CD8-positive, alpha-beta T cell (primary cell): ENCODE measurements at regions of chr9 and their contacts with region 1.

Region 1: DNA sequence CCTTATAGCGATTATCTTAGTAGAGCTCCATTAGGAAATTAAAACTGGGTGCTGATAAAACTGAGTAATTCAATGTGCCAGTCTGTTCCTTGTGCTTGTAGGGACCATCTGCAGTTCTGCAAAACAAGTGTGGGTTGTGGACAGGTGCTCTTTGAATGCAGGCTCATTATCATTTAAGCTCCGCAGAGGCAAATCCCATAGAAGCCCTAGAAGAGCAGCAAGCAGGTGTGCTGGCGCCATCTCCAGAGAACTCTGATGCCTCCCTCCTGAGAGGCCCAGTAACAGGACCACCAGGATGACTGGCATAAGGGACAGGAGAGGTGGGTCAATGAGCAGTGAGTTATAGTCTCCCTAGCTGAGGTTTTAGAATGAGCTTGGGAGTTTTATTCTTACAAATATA is 1342.4 kb upstream of the DMAC1 start:
- DNase-seq: no peak
- ATAC-seq: no peak
- H3K4me3 ChIP-seq: no peak overlapping the region
- H3K4me3 Mint-ChIP-seq: no peak overlapping the region
- H3K27ac ChIP-seq: no peak overlapping the region
- H3K27ac Mint-ChIP-seq: no peak overlapping the region
- H3K4me1 ChIP-seq: no peaks in the 10 kb centered on the region
- H3K4me1 Mint-ChIP-seq: no peaks in the 10 kb centered on the region
- H3K27me3 ChIP-seq: no peaks in the 10 kb centered on the region
- H3K27me3 Mint-ChIP-seq: no peaks in the 10 kb centered on the region
- CTCF ChIP-seq: no peak

Region 2: DNA sequence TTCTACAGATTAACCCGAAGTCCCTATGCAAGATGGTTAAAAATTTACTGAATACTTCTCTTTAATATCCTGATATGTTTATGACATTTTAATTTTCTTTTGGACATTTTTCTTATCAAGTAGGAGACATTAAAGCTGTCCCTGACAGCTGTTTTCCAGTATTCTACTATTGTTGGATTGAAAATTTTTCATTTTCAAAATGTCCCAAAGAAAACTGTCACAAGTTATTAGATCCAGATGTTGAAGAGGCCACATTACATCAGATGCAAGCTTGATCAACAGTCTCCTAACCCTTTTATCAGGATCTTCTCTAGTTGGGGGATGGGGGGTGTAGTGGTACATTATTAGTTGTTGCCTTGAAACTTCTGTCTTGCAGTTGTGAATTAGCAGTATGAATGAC is 60.3 kb after region 1 on chr9:
- CTCF ChIA-PET with region 1: no interaction called
- POLR2A ChIA-PET with region 1: no interaction called
- intact Hi-C with region 1: loop called in 1 of 2 experiments (anchors 10 kb)
- DNase-seq: no peak
- ATAC-seq: no peak
- H3K4me3 ChIP-seq: no peak overlapping the region
- H3K4me3 Mint-ChIP-seq: no peak overlapping the region
- H3K27ac ChIP-seq: no peak overlapping the region
- H3K27ac Mint-ChIP-seq: no peak overlapping the region
- H3K4me1 ChIP-seq: no peaks in the 10 kb centered on the region
- H3K4me1 Mint-ChIP-seq: no peaks in the 10 kb centered on the region
- H3K27me3 ChIP-seq: no peaks in the 10 kb centered on the region
- H3K27me3 Mint-ChIP-seq: no peaks in the 10 kb centered on the region
- CTCF ChIP-seq: no peak